Cardiac septum (tissue), 1 donor: ENCODE measurements at regions of chr2 and their contacts with region 1.

Region 1: DNA sequence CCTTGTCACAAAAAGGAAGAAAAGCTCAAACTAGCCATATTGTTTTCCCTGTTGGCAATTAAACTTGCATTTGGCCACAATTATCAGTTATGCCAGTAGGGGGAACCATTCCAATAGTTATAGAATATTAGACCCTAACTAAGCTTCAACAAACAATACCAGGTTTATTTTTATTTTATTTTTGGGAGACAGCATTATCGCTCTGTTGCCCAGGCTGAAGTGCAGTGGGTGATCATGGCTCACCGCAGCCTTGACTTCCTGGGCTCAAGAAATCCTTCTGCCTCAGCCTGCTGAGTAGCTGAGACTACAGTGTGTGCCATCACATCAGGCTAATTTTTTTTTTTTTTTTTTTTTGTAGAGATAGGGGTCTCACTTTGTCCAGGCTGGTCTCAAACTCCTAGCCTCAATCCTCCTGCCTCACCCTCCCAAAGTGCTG is 102.1 kb downstream of the ATAD2B start:
- DNase-seq: no peak

Region 2: GRCh38 chr2:23636426-23636825 is 188.4 kb before region 1 on chr2:
- intact Hi-C with region 1: no loop called
- DNase-seq: no peak

Region 3: GRCh38 chr2:24084386-24085361 is 259.9 kb after region 1 on chr2 and contains the start of gene TP53I3:
- intact Hi-C with region 1: loop called (anchors 1 kb)
- DNase-seq: peak; percentile 94
- total RNA-seq, gene TP53I3: 8.3 TPM